Sigmoid colon (tissue), 7 donors: ENCODE measurements at regions of chr11 and their contacts with region 1.

Region 1: GRCh38 chr11:59283825-59284772 is 71.4 kb upstream of the MPEG1 start:
- DNase-seq: no peak
- H3K4me3 ChIP-seq: no peak overlapping the region
- H3K27ac ChIP-seq: no peak overlapping the region
- H3K4me1 ChIP-seq: no peaks in the 10 kb centered on the region
- H3K27me3 ChIP-seq: no peaks in the 10 kb centered on the region
- CTCF ChIP-seq: peak; percentile 51 to 78 (median 62)
- EP300 ChIP-seq: no peak
- POLR2A ChIP-seq: no peak

Region 2: GRCh38 chr11:59207988-59208451 is 76.1 kb before region 1 on chr11:
- intact Hi-C with region 1: loop called (anchors 10 kb)
- DNase-seq: no peak
- H3K4me3 ChIP-seq: peak overlapping the region in 1 of 4 donors; percentile 26
- H3K27ac ChIP-seq: peak overlapping the region in 1 of 4 donors; percentile 25
- H3K4me1 ChIP-seq: no peaks in the 10 kb centered on the region
- H3K27me3 ChIP-seq: no peaks in the 10 kb centered on the region
- CTCF ChIP-seq: peak; percentile 32 to 70 (median 63)
- EP300 ChIP-seq: no peak
- POLR2A ChIP-seq: no peak